ENCODE measurements at regions of chr6 and their contacts with region 1.

Region 1: DNA sequence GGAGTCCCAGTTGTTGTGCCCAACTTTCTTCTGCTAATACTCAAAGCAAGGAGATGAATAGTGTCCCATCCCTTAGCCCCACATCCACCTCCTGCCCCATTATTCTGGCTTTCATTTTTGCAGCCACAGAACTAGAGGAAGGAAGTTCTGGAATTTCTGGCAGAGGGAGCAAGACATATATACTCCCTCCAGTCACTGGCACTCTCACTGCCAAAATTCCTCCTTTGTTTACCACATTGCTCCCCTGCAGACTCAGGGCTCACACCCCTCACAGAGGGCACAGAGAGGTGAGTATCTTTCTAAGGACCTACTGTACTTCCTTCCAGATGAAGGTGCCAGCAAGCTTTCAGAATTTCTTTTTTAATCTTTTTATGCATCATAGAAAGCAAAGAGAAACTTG is 168.0 kb upstream of the ID4 start:
- DNase-seq: no peak
- ATAC-seq: no peak
- H3K4me3 ChIP-seq: no peak overlapping the region
- H3K27ac ChIP-seq: peak overlapping the region in 1 of 2 donors; percentile 89
- H3K4me1 ChIP-seq: peaks cover 10 to 11% of the 10 kb centered on the region in 2 donors
- H3K27me3 ChIP-seq: no peaks in the 10 kb centered on the region

Region 2: GRCh38 chr6:19035461-19036195 is 633.6 kb before region 1 on chr6:
- intact Hi-C with region 1: loop called in 1 of 2 experiments (anchors 10 kb)
- DNase-seq: peak in 1 of 2 donors; percentile 32
- ATAC-seq: peak; percentile 41
- H3K4me3 ChIP-seq: no peak overlapping the region
- H3K27ac ChIP-seq: peak overlapping the region; percentile 28 to 76
- H3K4me1 ChIP-seq: peaks cover 3 to 5% of the 10 kb centered on the region in 2 donors
- H3K27me3 ChIP-seq: no peaks in the 10 kb centered on the region

Region 3: GRCh38 chr6:19714434-19715169 is 45.4 kb after region 1 on chr6:
- intact Hi-C with region 1: loop called in 1 of 2 experiments (anchors 5 kb)
- DNase-seq: no peak
- ATAC-seq: no peak
- H3K4me3 ChIP-seq: no peak overlapping the region
- H3K27ac ChIP-seq: no peak overlapping the region
- H3K4me1 ChIP-seq: peaks cover 0 to 8% of the 10 kb centered on the region in 2 donors
- H3K27me3 ChIP-seq: no peaks in the 10 kb centered on the region

Region 4: DNA sequence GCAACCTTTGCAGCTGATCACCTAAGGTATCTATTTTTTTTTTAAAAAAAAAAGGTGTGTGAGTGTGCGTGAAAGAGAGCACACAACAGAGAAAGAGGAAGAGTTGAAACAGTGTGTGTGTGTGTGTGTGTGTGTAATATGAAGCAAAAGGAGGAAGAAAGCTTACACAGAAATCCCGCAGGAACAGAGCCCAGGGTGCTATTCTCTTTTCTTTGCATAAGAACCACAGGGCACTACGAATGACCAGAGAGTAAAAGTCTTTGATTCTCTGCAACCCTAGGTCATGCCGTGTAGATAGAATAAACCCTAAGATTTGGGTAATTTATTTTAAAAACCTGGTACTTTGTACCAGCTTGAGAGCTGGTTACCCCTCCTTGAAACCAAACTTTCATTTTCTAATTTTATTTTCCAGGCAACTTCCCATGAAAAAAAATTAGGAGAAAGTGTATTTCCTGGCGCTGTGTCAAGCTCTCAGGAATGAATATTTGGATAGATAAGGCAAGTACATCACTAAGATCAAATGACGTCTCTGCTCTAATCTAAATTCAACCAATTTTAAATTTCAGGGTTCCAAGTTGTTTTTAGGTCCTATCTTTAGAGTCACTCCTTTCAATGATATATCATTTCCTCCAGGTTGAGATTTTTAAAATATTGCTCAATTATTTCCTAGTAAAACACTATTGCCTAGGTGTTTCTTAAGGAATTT is 120.0 kb after region 1 on chr6:
- intact Hi-C with region 1: loop called (anchors 5 to 10 kb)
- DNase-seq: no peak
- ATAC-seq: no peak
- H3K4me3 ChIP-seq: peak overlapping the region; percentile 16 to 48
- H3K27ac ChIP-seq: peak overlapping the region; percentile 59 to 76
- H3K4me1 ChIP-seq: peaks cover 0 to 5% of the 10 kb centered on the region in 2 donors
- H3K27me3 ChIP-seq: no peaks in the 10 kb centered on the region

Region 5: GRCh38 chr6:19836799-19837510 is 167.7 kb after region 1 on chr6 and contains the start of gene ID4:
- intact Hi-C with region 1: loop called in 1 of 2 experiments (anchors 5 kb)
- DNase-seq: peak; percentile 97 to 99
- ATAC-seq: peak; percentile 95
- H3K4me3 ChIP-seq: peak within 1 kb of the TSS; percentile 64 to 95
- H3K27ac ChIP-seq: peak within 1 kb of the TSS; percentile 96 to 100
- H3K4me1 ChIP-seq: no peaks in the 10 kb centered on the region
- H3K27me3 ChIP-seq: no peaks in the 10 kb centered on the region
- total RNA-seq, gene ID4: 85.1 to 111 TPM

Measured in aorta (tissue), 5 donors.